ENCODE measurements at regions of chr10 and their contacts with region 1.

Region 1: DNA sequence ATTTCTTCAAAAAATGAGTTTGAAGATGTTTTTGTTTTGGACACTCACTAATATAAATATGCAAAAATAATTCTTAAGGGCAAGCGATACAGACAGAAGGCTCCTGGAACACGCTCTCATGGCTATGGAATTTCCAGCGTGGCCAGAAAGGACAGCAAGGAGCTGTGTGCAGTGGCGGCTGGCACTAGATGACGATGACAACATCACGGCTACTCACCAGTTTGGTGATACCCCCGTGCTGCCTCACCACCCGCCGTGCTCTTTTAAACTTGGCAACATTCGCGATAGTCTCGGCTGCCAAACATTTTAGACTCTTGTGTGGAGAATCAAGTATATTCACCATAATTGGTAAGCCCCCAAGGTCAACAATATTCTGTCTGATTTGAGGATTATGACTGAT is 54.9 kb downstream of the ODAD2 start:
- DNase-seq: no peak
- H3K4me3 ChIP-seq: no peak overlapping the region
- H3K27ac ChIP-seq: no peak overlapping the region
- H3K4me1 ChIP-seq: no peaks in the 10 kb centered on the region
- H3K27me3 ChIP-seq: 0 out of 2 replicates have a peak, but pooled peaks cover 5% of the 10 kb centered on the region
- CTCF ChIP-seq: no peak

Region 2: DNA sequence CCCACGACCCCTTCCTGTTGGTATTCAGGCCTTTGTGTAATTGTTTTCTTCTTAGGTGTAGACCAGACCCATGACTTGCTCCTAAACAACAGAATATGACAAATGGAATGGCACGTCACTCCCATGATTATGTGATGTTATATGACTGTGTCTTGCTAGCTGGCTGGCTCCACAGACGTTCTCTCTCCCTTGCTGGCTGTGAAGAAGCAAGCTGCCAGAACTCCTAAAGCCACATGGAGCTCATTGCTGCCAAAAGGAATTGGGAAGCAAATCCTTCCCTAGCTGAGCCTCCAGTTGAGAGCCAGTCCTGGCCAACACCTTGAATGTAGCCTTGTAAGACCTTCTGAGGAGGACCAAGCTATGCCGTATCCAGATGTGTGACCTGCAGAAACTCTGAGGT is 365.7 kb before region 1 on chr10:
- CTCF ChIA-PET with region 1: no interaction called
- POLR2A ChIA-PET with region 1: no interaction called
- intact Hi-C with region 1: no loop called
- DNase-seq: no peak
- H3K4me3 ChIP-seq: no peak overlapping the region
- H3K27ac ChIP-seq: no peak overlapping the region
- H3K4me1 ChIP-seq: no peaks in the 10 kb centered on the region
- H3K27me3 ChIP-seq: no peaks in the 10 kb centered on the region
- CTCF ChIP-seq: no peak

Region 3: GRCh38 chr10:27865221-27865638 is 78.8 kb before region 1 on chr10:
- CTCF ChIA-PET with region 1: no interaction called
- POLR2A ChIA-PET with region 1: no interaction called
- intact Hi-C with region 1: no loop called
- DNase-seq: no peak
- H3K4me3 ChIP-seq: no peak overlapping the region
- H3K27ac ChIP-seq: no peak overlapping the region
- H3K4me1 ChIP-seq: no peaks in the 10 kb centered on the region
- H3K27me3 ChIP-seq: no peaks in the 10 kb centered on the region
- CTCF ChIP-seq: no peak

Region 4: DNA sequence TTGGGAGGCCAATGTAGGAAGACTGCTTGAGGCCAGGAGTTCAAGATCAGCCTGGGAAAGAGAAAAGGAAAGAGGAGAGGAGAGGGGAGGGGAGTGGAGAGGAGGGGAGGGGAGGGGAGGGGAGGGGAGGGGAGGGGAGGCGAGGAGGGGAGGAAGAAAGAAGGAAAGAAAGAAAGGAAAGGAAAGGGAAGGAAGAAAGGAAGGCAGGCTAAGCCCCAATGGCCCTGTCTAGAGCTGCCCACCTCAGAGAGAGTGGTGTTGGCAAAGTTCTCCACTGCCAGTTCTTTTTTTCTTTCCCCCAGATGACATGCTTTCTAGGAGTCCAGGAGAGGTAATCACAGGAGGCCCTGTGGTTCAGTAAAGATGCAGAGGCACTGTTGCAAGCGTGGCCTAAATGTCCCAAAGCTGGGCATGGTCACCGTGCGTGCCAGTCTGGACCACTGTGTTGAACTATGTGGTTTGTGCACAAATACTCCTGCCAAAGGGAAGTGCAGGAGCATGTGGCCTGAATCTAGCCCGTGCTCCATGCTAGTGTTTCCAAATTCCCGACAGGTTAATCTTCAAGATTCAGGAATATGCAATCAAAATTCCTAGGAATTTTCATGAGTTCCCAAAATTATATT is 15.2 kb after region 1 on chr10:
- CTCF ChIA-PET with region 1: no interaction called
- POLR2A ChIA-PET with region 1: no interaction called
- intact Hi-C with region 1: no loop called
- DNase-seq: no peak
- H3K4me3 ChIP-seq: no peak overlapping the region
- H3K27ac ChIP-seq: no peak overlapping the region
- H3K4me1 ChIP-seq: no peaks in the 10 kb centered on the region
- H3K27me3 ChIP-seq: no peaks in the 10 kb centered on the region
- CTCF ChIP-seq: no peak

Region 5: GRCh38 chr10:28744069-28744768 is 800.2 kb after region 1 on chr10:
- CTCF ChIA-PET with region 1: interaction called, 11 read pairs
- POLR2A ChIA-PET with region 1: no interaction called
- intact Hi-C with region 1: no loop called
- DNase-seq: no peak
- H3K4me3 ChIP-seq: no peak overlapping the region
- H3K27ac ChIP-seq: no peak overlapping the region
- H3K4me1 ChIP-seq: no peaks in the 10 kb centered on the region
- H3K27me3 ChIP-seq: no peaks in the 10 kb centered on the region
- CTCF ChIP-seq: no peak

Measured in PC-9 (cell line).